ENCODE measurements at regions of chr1 and their contacts with region 1.

Region 1: GRCh38 chr1:201709564-201710295 is 119.2 kb upstream of the IPO9 start:
- DNase-seq: peak; percentile 66
- ATAC-seq: peak; percentile 69
- H3K4me3 ChIP-seq: no peak overlapping the region
- H3K27ac ChIP-seq: peak overlapping the region; percentile 74
- H3K4me1 ChIP-seq: peaks cover 41% of the 10 kb centered on the region
- H3K27me3 ChIP-seq: no peaks in the 10 kb centered on the region
- CTCF ChIP-seq: peak; percentile 87
- POLR2A ChIP-seq: 0 out of 2 replicates have a peak, but pooled peaks have one; percentile 25
- RAD21 ChIP-seq: peak; percentile 94

Region 2: DNA sequence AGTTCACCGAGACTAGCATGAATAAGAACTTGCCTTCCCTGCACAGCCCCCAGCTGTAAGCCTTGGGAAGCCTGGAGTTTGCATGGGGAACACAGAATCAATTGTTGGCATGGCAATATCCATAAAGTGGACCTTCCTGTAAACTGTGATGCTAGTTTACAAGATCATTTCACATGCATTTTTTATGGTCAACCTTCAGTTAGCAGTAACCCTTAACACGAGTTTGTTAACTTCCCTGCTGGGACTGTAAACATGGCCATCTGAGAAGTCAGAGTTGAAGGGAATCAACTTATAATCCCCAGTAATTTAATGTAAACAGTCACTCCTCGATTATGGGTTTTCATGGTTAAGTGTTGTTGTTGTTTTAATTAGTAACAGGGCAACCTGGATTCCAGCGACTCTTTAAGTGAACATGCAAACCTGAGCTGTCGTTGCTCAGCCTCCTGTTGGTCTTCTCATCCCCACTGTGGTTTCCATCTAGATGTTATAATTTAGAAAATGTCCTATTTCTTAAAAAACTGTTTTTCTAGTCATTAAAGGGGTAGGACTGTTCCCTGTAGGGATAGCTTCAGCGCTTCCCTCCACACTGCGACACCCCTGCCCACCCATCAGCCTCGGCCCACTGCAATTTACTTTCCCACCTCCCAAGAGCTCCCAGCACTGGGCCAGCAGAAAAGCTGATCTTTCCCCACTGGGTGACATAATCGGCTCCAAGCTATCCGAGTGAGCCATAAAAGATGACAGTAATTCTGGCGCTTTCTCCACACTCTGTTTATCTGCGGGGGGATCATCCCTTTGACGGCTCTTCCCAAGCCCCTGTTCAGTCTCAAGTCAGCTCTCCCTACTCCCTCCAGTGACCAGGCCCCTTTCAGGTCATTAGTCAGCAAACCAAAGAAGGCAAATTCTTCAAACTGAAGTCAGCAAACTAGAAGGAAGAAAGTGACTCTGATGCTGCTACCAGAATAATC is 11.6 kb after region 1 on chr1:
- CTCF ChIA-PET with region 1: interaction called, 5 read pairs
- POLR2A ChIA-PET with region 1: no interaction called
- dilution Hi-C with region 1: no loop called
- in situ Hi-C with region 1: no loop called
- intact Hi-C with region 1: loop called (anchors 1 kb)
- DNase-seq: peak; percentile 83
- ATAC-seq: peak; percentile 34
- H3K4me3 ChIP-seq: no peak overlapping the region
- H3K27ac ChIP-seq: peak overlapping the region; percentile 88
- H3K4me1 ChIP-seq: peaks cover 32% of the 10 kb centered on the region
- H3K27me3 ChIP-seq: no peaks in the 10 kb centered on the region
- CTCF ChIP-seq: no peak
- POLR2A ChIP-seq: no peak
- RAD21 ChIP-seq: no peak; the same call in 1 of the 2 replicates

Region 3: GRCh38 chr1:201748335-201748734 is 38.6 kb after region 1 on chr1:
- CTCF ChIA-PET with region 1: interaction called, 4 read pairs
- POLR2A ChIA-PET with region 1: no interaction called
- dilution Hi-C with region 1: no loop called
- in situ Hi-C with region 1: no loop called
- intact Hi-C with region 1: loop called (anchors 5 kb)
- DNase-seq: peak; percentile 97
- ATAC-seq: peak; percentile 82
- H3K4me3 ChIP-seq: no peak overlapping the region
- H3K27ac ChIP-seq: peak overlapping the region; percentile 64
- H3K4me1 ChIP-seq: peaks cover 40% of the 10 kb centered on the region
- H3K27me3 ChIP-seq: no peaks in the 10 kb centered on the region
- CTCF ChIP-seq: no peak
- POLR2A ChIP-seq: no peak
- RAD21 ChIP-seq: no peak

Region 4: GRCh38 chr1:201786824-201787223 is 77.1 kb after region 1 on chr1:
- CTCF ChIA-PET with region 1: interaction called, 3 read pairs
- POLR2A ChIA-PET with region 1: no interaction called
- dilution Hi-C with region 1: no loop called
- in situ Hi-C with region 1: loop called (anchors 5 kb)
- intact Hi-C with region 1: no loop called
- DNase-seq: no peak
- ATAC-seq: no peak
- H3K4me3 ChIP-seq: no peak overlapping the region
- H3K27ac ChIP-seq: no peak overlapping the region
- H3K4me1 ChIP-seq: peaks cover 29% of the 10 kb centered on the region
- H3K27me3 ChIP-seq: no peaks in the 10 kb centered on the region
- CTCF ChIP-seq: no peak
- POLR2A ChIP-seq: no peak
- RAD21 ChIP-seq: no peak

Region 5: GRCh38 chr1:201792534-201793305 is 83.0 kb after region 1 on chr1:
- CTCF ChIA-PET with region 1: interaction called, 28 read pairs
- POLR2A ChIA-PET with region 1: no interaction called
- dilution Hi-C with region 1: no loop called
- in situ Hi-C with region 1: loop called (anchors 5 kb)
- intact Hi-C with region 1: loop called (anchors 1 kb)
- DNase-seq: peak; percentile 85
- ATAC-seq: peak; percentile 84
- H3K4me3 ChIP-seq: no peak overlapping the region
- H3K27ac ChIP-seq: peak overlapping the region; percentile 69
- H3K4me1 ChIP-seq: peaks cover 32% of the 10 kb centered on the region
- H3K27me3 ChIP-seq: no peaks in the 10 kb centered on the region
- CTCF ChIP-seq: peak; percentile 97
- POLR2A ChIP-seq: peak; percentile 35; the same call in 1 of the 2 replicates
- RAD21 ChIP-seq: peak; percentile 99

Region 6: DNA sequence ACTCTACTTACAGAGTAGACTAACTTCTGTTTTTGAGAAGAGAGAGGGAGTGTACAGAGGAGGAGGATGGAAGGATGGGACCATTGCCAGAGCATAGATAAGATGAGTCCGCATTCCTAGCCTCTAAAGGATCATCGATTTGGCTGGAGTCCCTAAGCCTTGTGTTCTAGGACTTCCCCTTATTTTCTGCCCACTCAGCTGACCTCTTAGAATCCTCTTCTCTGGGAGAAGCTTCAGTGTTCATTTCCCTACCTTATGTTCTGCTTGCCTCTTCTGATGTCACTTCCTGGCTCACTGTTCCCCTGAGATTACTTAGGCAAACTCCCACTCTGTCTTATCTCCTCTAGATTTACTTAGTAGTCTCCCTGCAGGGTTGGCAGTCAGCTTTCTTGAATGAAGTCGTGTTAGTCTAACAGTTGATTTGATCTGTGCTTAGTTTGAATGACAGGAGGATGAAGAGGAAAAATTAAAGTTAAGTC is 843.9 kb after region 1 on chr1:
- CTCF ChIA-PET with region 1: no interaction called
- POLR2A ChIA-PET with region 1: no interaction called
- dilution Hi-C with region 1: no loop called
- in situ Hi-C with region 1: no loop called
- intact Hi-C with region 1: no loop called
- DNase-seq: peak; percentile 67
- ATAC-seq: no peak
- H3K4me3 ChIP-seq: no peak overlapping the region
- H3K27ac ChIP-seq: no peak overlapping the region
- H3K4me1 ChIP-seq: peaks cover 1% of the 10 kb centered on the region; the same call in 1 of the 2 replicates
- H3K27me3 ChIP-seq: no peaks in the 10 kb centered on the region
- CTCF ChIP-seq: no peak
- POLR2A ChIP-seq: no peak
- RAD21 ChIP-seq: no peak